ENCODE measurements at regions of chr3 and their contacts with region 1.

Region 1: DNA sequence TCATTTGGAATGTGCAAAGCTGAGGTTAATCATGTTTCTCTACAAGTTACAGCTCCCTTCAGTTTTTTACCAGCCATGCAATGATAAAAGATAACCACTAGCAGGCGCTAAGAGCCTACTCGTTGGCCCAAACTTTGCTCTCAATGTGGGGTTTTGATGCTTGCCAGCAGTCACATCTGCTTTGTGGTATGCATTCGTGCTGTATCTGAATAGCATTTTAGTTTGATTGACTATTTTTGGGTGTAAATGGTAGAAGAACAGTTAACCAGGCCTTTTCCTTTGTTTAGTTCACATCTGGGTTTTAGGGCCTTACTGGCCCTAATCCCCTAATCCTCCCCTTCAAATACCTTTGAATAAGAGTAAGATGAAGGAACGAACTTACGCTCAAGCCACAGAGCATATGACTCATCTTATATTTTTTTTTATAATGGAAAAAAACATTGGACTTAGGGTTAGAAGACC is 4.4 kb upstream of the CLDN11 start:
- DNase-seq: peak; percentile 68
- H3K4me3 ChIP-seq: no peak overlapping the region
- H3K27ac ChIP-seq: no peak overlapping the region
- H3K4me1 ChIP-seq: peaks cover 11% of the 10 kb centered on the region
- H3K27me3 ChIP-seq: peaks cover 3% of the 10 kb centered on the region
- CTCF ChIP-seq: peak; percentile 100

Region 2: GRCh38 chr3:170037463-170038433 is 376.5 kb before region 1 on chr3 and contains the start of gene GPR160:
- CTCF ChIA-PET with region 1: no interaction called
- dilution Hi-C with region 1: no loop called
- in situ Hi-C with region 1: no loop called
- intact Hi-C with region 1: loop called (anchors 5 kb)
- DNase-seq: peak; percentile 27
- H3K4me3 ChIP-seq: peak within 1 kb of the TSS; percentile 37 to 55 (median 48)
- H3K27ac ChIP-seq: no peak within 1 kb of the TSS
- H3K4me1 ChIP-seq: peaks cover 8% of the 10 kb centered on the region
- H3K27me3 ChIP-seq: peaks cover 22% of the 10 kb centered on the region
- CTCF ChIP-seq: peak; percentile 45 to 78
- total RNA-seq, gene GPR160: 0.33 to 0.66 TPM

Region 3: DNA sequence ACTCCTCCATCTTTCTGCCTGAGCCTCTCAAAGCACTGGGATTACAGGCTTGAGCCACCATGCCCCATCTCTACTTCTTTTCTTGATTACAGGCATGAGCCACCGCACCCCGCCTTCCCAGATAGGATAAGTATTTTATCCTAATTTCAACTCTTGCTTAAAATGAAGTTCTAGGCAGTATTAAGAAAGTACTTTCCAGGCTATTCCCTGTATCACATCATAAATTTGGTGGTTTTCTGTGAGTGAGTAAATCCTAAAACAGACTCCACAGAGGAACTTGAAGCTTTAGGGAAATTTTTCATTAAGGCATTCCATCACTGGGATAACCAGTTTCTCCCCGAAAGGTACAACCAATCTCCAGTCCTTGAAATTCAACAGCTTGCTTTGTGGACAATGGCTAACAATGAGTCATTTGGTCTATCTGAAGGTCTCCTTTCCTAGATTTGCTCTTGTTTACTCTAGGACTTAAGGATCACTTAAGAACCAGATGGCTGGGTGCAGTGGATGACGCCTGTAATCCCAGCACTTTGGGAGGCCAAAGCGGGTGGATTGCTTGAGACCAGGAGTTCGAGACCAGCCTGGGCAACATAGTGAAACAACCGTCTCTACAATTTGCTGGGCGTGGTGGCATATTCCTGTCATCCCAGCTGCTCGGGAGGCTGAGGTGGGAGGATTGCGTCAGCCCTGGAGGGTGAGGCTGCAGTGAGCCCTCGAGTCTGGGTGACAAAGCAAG is 106.4 kb before region 1 on chr3:
- CTCF ChIA-PET with region 1: no interaction called
- dilution Hi-C with region 1: no loop called
- in situ Hi-C with region 1: loop called (anchors 10 kb)
- intact Hi-C with region 1: loop called (anchors 1 kb)
- DNase-seq: peak; percentile 38
- H3K4me3 ChIP-seq: no peak overlapping the region
- H3K27ac ChIP-seq: no peak overlapping the region
- H3K4me1 ChIP-seq: no peaks in the 10 kb centered on the region
- H3K27me3 ChIP-seq: no peaks in the 10 kb centered on the region
- CTCF ChIP-seq: no peak

Region 4: DNA sequence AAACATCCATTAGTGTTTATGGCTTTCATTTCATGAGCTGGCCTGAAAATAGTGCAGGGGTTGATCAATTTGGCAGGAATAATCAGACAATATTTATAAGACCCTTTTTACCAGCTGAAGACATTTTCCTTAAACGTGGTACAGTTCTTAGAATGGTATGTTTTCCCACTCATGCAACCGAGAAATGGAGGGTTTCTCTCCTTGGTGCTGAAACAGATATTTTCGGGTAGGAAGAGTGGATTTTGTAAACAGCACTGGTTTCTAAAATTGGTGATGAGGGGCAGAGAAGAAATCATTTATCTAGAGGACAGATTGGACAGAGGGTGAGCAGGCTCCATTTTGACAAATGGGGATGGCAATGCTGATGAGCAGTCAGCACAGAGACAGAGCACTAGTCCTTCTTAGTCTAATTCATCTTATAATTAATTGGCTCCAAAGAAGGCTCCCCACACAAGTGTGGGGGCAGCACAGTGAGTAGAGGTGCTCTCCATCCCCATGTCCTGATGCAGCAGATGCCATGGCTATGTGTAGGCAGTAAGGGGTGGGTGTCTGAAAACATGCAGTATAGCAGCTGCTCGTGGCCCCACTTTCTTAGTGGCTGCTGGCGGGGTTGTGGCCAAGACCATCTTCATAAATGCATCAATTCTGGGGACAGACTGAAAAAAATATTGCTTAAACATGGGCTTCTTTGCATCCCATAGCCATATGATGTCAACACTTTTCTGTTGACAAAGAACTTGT is 189.7 kb after region 1 on chr3:
- CTCF ChIA-PET with region 1: no interaction called
- dilution Hi-C with region 1: no loop called
- in situ Hi-C with region 1: no loop called
- intact Hi-C with region 1: loop called (anchors 10 kb)
- DNase-seq: no peak
- H3K4me3 ChIP-seq: no peak overlapping the region
- H3K27ac ChIP-seq: no peak overlapping the region
- H3K4me1 ChIP-seq: no peaks in the 10 kb centered on the region
- H3K27me3 ChIP-seq: no peaks in the 10 kb centered on the region
- CTCF ChIP-seq: no peak

Region 5: DNA sequence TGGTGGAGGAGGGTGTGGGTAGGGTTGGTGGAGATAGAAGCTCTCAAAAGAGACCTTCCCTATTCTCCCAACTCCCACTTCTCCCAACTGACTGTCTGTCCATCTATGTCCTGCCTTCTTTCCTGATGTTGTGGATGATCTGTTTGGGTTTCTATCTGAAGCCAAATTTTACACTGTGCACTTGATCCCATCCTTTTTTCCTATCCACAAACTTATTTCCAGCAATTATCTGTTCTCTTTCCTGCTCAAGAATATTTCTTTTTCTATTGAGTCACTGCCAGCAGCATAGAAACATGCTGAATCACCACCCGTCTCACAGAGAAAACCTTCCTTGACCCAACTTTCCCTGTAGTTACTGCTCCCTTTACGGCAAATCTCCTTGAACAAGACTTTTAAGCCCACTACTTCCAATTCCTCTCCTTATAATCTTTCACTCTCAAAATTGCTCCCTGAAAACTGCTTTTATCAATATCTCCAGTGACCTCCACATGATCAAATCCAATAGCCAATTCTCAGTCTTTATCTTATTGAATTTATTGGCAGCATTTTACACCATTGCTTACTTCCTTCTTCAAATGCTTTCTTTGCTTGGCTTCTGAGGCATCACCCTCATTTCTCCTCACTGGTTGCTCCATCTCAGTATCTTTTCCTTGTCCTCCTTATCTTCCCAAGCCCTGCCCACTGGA is 312.9 kb after region 1 on chr3:
- CTCF ChIA-PET with region 1: no interaction called
- dilution Hi-C with region 1: no loop called
- in situ Hi-C with region 1: no loop called
- intact Hi-C with region 1: loop called (anchors 1 kb)
- DNase-seq: peak; percentile 84
- H3K4me3 ChIP-seq: peak overlapping the region in 2 of 3 experiments; percentile 4 to 12
- H3K27ac ChIP-seq: peak overlapping the region; percentile 97
- H3K4me1 ChIP-seq: peaks cover 42% of the 10 kb centered on the region
- H3K27me3 ChIP-seq: no peaks in the 10 kb centered on the region
- CTCF ChIP-seq: no peak

Region 6: GRCh38 chr3:170848292-170848917 is 434.2 kb after region 1 on chr3:
- CTCF ChIA-PET with region 1: interaction called, 8 read pairs
- dilution Hi-C with region 1: no loop called
- in situ Hi-C with region 1: no loop called
- intact Hi-C with region 1: loop called (anchors 1 kb)
- DNase-seq: no peak
- H3K4me3 ChIP-seq: no peak overlapping the region
- H3K27ac ChIP-seq: no peak overlapping the region
- H3K4me1 ChIP-seq: no peaks in the 10 kb centered on the region
- H3K27me3 ChIP-seq: no peaks in the 10 kb centered on the region
- CTCF ChIP-seq: peak; percentile 46 to 59